ENCODE measurements at regions of chr9 and their contacts with region 1.

Region 1: GRCh38 chr9:107425101-107426045 is 64.2 kb downstream of the KLF4 start:
- DNase-seq: peak; percentile 79
- ATAC-seq: peak; percentile 76
- H3K4me3 Mint-ChIP-seq: peak overlapping the region; percentile 29; the same call in 1 of the 2 replicates
- H3K27ac Mint-ChIP-seq: no peak overlapping the region
- H3K4me1 Mint-ChIP-seq: peaks cover 5% of the 10 kb centered on the region
- H3K27me3 Mint-ChIP-seq: peaks cover 19% of the 10 kb centered on the region
- CTCF ChIP-seq: peak; percentile 97

Region 2: DNA sequence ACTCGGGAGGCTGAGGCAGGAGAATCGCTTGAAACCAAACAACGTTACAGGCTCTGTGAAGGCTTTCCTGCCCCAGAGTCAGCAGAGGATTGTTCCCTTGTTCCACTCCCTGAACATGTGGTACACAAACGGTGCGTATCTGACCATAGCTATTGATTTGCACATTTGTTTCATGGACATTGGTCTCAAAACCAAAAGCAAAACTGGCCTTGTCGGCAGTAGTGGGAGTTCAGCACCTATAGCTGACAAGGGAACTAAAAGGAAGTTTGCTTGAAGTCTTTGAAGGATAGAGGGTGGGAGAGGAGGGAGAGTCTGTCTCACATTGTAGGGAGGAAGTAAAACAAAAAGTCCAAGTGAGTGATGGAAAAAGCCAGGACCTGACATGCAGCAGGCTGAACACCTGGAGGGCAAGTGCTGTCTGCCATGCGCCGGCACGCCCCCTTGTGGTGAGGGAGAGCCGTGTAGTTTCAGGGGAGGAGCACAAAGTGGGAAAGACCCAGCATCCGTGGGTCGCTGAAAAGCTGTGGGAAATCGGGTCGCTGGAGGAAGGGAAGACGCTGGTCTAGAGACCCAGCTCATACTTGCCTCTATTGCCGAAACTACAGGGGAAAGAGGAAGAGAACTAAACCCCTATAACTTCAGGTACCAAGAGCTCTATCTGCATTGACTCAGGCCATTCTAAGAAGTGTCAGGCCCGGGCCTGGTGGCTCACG is 84.3 kb before region 1 on chr9:
- CTCF ChIA-PET with region 1: interaction called, 18 read pairs
- POLR2A ChIA-PET with region 1: no interaction called
- DNase-seq: peak; percentile 92
- ATAC-seq: peak; percentile 74
- H3K4me3 Mint-ChIP-seq: no peak overlapping the region
- H3K27ac Mint-ChIP-seq: peak overlapping the region; percentile 71; the same call in 1 of the 2 replicates
- H3K4me1 Mint-ChIP-seq: peaks cover 22% of the 10 kb centered on the region
- H3K27me3 Mint-ChIP-seq: no peaks in the 10 kb centered on the region
- CTCF ChIP-seq: peak; percentile 96

Region 3: GRCh38 chr9:107397723-107398044 is 27.7 kb before region 1 on chr9:
- CTCF ChIA-PET with region 1: interaction called, 10 read pairs
- POLR2A ChIA-PET with region 1: no interaction called
- DNase-seq: no peak
- ATAC-seq: no peak
- H3K4me3 Mint-ChIP-seq: no peak overlapping the region
- H3K27ac Mint-ChIP-seq: no peak overlapping the region
- H3K4me1 Mint-ChIP-seq: peaks cover 9% of the 10 kb centered on the region
- H3K27me3 Mint-ChIP-seq: no peaks in the 10 kb centered on the region
- CTCF ChIP-seq: no peak

Region 4: DNA sequence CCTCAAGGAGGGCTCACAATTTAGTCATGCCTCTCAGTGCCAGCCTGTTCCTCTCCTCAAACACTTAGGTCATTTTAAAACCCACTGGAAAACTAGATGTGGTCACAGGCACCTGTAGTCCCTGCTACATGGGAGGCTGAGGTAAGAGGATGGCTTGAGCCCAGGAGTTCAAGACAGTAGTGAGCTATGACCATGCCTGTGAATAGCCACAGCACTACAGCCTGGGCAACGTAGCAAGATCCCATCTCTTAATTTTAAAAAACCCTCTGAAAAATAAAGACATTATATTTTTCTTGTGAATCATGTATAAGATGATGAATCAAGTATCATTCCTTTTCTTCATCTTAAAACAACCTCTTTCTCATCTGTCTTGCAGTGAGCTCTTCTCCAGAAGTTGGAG is 18.4 kb after region 1 on chr9:
- CTCF ChIA-PET with region 1: interaction called, 29 read pairs
- POLR2A ChIA-PET with region 1: no interaction called
- DNase-seq: no peak
- ATAC-seq: no peak
- H3K4me3 Mint-ChIP-seq: no peak overlapping the region
- H3K27ac Mint-ChIP-seq: no peak overlapping the region
- H3K4me1 Mint-ChIP-seq: peaks cover 12% of the 10 kb centered on the region
- H3K27me3 Mint-ChIP-seq: no peaks in the 10 kb centered on the region
- CTCF ChIP-seq: no peak

Region 5: GRCh38 chr9:107460203-107461023 is 35.0 kb after region 1 on chr9:
- CTCF ChIA-PET with region 1: interaction called, 88 read pairs
- POLR2A ChIA-PET with region 1: interaction called, 6 read pairs
- DNase-seq: no peak
- ATAC-seq: peak; percentile 92
- H3K4me3 Mint-ChIP-seq: no peak overlapping the region
- H3K27ac Mint-ChIP-seq: no peak overlapping the region
- H3K4me1 Mint-ChIP-seq: peaks cover 11% of the 10 kb centered on the region
- H3K27me3 Mint-ChIP-seq: peaks cover 23% of the 10 kb centered on the region
- CTCF ChIP-seq: no peak

Region 6: DNA sequence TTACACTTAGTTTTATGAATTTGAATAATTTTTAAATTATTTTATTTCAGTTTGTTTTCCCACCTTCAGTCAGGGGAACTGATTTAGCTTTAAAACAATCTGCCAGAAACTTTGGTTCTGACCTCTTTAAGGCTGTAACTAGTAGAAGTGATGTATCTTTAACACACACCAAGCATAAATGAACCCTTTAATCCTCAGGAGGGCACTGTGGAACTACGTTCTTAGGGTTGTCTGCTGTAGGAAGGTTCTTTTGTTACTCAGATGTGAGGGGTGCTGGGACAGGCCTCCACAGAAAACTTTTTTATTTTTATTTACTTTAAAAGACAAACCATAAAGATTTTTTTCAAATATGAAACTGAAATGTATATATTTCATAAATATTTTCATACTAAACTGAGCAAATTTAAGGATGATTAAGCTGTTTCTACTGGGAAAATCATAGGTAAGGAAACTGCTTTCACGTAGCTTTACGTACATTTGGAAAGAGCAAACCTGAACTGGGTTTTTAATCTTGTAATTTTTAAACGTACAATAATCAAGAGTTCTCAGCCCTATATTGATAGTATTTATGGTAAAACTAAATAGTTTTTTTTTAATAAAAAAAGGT is 58.8 kb after region 1 on chr9:
- CTCF ChIA-PET with region 1: interaction called, 52 read pairs
- POLR2A ChIA-PET with region 1: no interaction called
- DNase-seq: peak; percentile 19
- ATAC-seq: peak; percentile 55
- H3K4me3 Mint-ChIP-seq: no peak overlapping the region
- H3K27ac Mint-ChIP-seq: no peak overlapping the region
- H3K4me1 Mint-ChIP-seq: peaks cover 21% of the 10 kb centered on the region
- H3K27me3 Mint-ChIP-seq: peaks cover 36% of the 10 kb centered on the region
- CTCF ChIP-seq: no peak

Region 7: DNA sequence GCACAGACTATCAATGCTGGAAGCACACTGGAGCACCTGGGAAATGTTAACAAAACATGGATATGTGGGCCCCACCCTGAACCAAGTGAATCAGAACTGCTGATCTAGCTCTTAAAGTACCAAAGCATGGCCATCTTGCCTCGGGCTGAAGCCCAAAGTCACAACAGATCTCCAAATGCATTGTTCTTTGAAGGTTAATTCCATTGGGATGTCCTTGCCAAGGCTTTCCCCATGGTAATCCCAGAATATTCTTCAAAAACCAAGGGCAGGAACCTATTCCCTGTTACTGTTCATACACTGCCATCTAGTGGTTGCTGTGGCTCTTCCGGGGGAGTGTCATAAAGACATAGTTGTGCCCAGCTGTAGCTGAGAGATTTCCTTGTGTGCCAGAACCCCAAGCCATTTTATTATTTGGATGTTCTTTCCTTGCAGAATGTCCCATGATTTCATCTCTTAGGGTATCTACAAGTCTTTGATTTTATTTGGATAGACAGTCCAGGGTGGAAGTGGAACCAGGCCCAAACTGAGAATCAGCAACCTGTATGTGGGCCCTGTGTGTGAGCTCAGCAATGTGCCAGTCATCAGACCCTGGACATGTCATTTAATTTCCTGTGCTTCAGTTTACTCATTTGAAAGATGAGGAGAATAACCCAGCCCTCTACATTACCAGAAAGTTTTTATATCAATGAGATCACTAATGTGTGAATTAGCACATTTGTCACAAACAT is 1140.4 kb after region 1 on chr9:
- CTCF ChIA-PET with region 1: interaction called, 11 read pairs
- POLR2A ChIA-PET with region 1: no interaction called
- DNase-seq: peak; percentile 31
- ATAC-seq: peak; percentile 96
- H3K4me3 Mint-ChIP-seq: no peak overlapping the region
- H3K27ac Mint-ChIP-seq: no peak overlapping the region
- H3K4me1 Mint-ChIP-seq: peaks cover 14% of the 10 kb centered on the region
- H3K27me3 Mint-ChIP-seq: no peaks in the 10 kb centered on the region; the same call in 1 of the 2 replicates
- CTCF ChIP-seq: 0 out of 2 replicates have a peak, but pooled peaks have one; percentile 25

Measured in WTC11 (cell line).